GM10248 (cell line): ENCODE measurements at regions of chr1 and their contacts with region 1.

Region 1: GRCh38 chr1:6033986-6034749 is 11.5 kb upstream of the KCNAB2 start:
- DNase-seq: no peak
- CTCF ChIP-seq: peak; percentile 33

Region 2: GRCh38 chr1:5921671-5922070 is 112.5 kb before region 1 on chr1:
- CTCF ChIA-PET with region 1: no interaction called
- POLR2A ChIA-PET with region 1: no interaction called
- DNase-seq: no peak
- CTCF ChIP-seq: no peak

Region 3: DNA sequence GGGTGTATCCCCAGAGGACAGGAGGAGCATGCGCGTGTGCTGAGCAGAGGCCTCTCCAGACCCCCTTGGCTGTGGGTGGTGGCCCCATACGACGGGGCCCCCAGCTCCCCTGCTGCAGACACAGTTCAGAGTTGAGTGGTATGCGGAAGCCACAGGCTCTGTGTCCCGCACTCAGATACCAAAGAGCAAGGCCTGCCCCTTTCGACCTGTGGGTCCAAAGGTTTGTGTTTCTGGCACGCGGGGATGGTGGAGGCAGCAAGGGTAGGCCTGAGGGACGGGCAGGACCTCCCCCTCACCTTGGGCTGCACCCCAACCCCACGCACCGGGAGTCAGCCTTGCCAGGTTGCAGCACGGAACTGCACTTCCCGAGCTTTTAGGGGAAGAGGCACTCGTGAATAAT is 11.4 kb after region 1 on chr1 and contains the start of gene KCNAB2:
- CTCF ChIA-PET with region 1: interaction called, 12 read pairs
- POLR2A ChIA-PET with region 1: no interaction called
- DNase-seq: no peak
- CTCF ChIP-seq: no peak

Region 4: GRCh38 chr1:6059866-6060265 is 25.7 kb after region 1 on chr1:
- CTCF ChIA-PET with region 1: no interaction called
- POLR2A ChIA-PET with region 1: no interaction called
- DNase-seq: no peak
- CTCF ChIP-seq: no peak